Activated CD4-positive, alpha-beta memory T cell treated with anti-CD3 and anti-CD28 coated beads, Interleukin-2, amount 10 ng/mL, durations not matched to agents 7 days and 5 days (primary cell): ENCODE measurements at regions of chr3 and their contacts with region 1.

Region 1: GRCh38 chr3:141561426-141562034 is 74.7 kb downstream of the RASA2 start:
- DNase-seq: peak; percentile 32
- H3K4me3 Mint-ChIP-seq: no peak overlapping the region
- H3K27ac Mint-ChIP-seq: no peak overlapping the region
- H3K4me1 Mint-ChIP-seq: peaks cover 28% of the 10 kb centered on the region
- H3K27me3 Mint-ChIP-seq: no peaks in the 10 kb centered on the region

Region 2: GRCh38 chr3:141477224-141477623 is 84.3 kb before region 1 on chr3:
- CTCF ChIA-PET with region 1: interaction called, 37 read pairs
- POLR2A ChIA-PET with region 1: interaction called, 3 read pairs
- DNase-seq: no peak
- H3K4me3 Mint-ChIP-seq: no peak overlapping the region
- H3K27ac Mint-ChIP-seq: no peak overlapping the region
- H3K4me1 Mint-ChIP-seq: peaks cover 29% of the 10 kb centered on the region
- H3K27me3 Mint-ChIP-seq: peaks cover 16% of the 10 kb centered on the region

Region 3: DNA sequence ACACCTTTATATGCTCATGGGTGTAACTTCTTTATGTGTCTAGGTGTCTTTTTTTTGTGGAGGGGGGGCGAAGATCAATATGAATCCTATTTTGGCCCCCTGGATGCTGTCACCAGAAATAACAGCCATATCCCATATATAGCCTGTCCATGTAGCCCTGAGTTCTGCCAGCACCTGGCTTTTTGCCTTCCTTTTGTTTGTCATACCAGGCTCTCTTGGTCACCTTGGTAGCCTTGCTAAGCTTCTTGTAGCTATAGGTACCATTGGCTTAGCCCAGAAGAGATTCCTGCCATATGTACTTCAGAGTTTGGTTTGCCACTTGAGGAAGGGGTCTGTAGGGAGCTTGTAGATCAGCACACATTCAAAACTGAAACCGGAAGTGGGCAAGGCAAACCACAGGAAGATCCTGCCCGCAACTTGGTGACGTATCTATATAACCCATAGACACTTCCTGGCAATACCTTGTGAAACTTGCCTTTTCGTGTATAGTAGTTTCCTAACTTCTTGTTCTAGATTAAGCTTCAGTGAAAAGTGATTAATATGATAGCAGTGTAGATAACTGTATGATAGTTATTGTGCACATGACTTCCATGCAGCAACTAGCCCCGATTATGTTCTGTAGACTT is 62.8 kb before region 1 on chr3:
- CTCF ChIA-PET with region 1: interaction called, 11 read pairs
- POLR2A ChIA-PET with region 1: interaction called, 13 read pairs
- DNase-seq: peak; percentile 93
- H3K4me3 Mint-ChIP-seq: peak overlapping the region; percentile 53
- H3K27ac Mint-ChIP-seq: peak overlapping the region; percentile 85
- H3K4me1 Mint-ChIP-seq: peaks cover 70% of the 10 kb centered on the region
- H3K27me3 Mint-ChIP-seq: no peaks in the 10 kb centered on the region

Region 4: DNA sequence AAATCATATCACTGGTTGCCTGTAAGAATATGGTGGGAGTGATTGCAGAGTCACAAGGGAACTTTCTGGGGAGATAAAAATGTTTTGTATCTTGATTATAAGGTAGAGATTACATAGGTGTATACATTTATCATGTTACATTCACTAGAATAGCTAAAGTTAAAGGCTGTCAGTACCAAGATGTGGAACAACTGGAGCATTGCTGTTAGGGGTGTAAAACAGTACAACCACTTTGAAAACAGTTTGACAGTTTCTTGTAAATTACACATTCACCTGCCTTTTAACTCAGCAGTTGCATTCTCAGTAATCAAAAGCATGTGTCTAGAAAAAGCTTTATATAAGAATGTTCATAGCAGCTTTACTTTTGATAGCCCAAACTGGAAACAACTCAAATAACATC is 47.1 kb before region 1 on chr3:
- CTCF ChIA-PET with region 1: interaction called, 13 read pairs
- POLR2A ChIA-PET with region 1: interaction called, 3 read pairs
- DNase-seq: no peak
- H3K4me3 Mint-ChIP-seq: no peak overlapping the region
- H3K27ac Mint-ChIP-seq: no peak overlapping the region
- H3K4me1 Mint-ChIP-seq: peaks cover 28% of the 10 kb centered on the region
- H3K27me3 Mint-ChIP-seq: no peaks in the 10 kb centered on the region

Region 5: GRCh38 chr3:141812084-141812483 is 250.6 kb after region 1 on chr3:
- CTCF ChIA-PET with region 1: no interaction called
- POLR2A ChIA-PET with region 1: no interaction called
- DNase-seq: no peak
- H3K4me3 Mint-ChIP-seq: no peak overlapping the region
- H3K27ac Mint-ChIP-seq: no peak overlapping the region
- H3K4me1 Mint-ChIP-seq: no peaks in the 10 kb centered on the region
- H3K27me3 Mint-ChIP-seq: peaks cover 16% of the 10 kb centered on the region